ENCODE measurements at regions of chr1 and their contacts with region 1.

Region 1: DNA sequence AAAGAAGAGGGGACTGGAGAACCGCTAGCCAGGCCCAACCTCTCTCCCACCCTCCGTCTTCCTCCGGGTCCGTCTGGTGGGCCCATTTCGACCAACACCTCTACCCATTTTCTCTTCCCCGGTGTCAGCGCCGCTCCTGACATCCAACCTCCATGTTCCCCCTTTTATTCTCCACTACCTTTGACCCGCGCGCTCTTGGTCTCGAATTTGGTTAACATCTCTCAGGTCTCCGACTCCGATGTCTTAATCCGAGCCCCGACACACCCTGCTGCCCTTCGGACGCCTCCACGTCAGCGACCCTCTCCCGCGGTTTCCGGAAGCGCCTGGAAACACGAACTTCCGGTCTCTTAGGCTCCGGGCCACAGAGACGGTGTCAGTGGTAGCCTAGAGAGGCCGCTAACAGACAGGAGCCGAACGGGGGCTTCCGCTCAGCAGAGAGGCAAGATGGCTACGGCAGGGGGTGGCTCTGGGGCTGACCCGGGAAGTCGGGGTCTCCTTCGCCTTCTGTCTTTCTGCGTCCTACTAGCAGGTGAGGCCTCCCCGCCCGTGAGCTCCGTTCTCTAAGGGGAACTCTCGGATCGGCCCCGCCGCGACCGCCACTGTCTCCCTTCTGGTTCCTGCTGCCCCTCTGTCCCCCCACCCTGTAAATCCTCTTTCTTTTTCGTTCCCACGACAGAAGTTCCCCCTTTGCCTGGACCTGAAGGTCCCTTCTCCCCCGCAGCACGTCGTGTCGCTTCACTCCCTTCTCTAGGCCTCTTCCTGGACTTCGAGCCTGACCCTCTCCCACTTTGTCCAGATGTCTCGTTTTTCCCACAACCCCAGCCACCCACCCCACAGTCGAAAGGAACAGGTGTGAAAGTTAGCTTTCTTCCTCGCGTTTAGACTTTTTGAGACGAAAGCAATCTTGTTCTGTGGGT is at the starts of genes COPA and NCSTN:
- DNase-seq: peak; percentile 96
- H3K4me3 ChIP-seq: peak within 1 kb of the TSS; percentile 68 to 84 (median 75)
- H3K27ac ChIP-seq: peak within 1 kb of the TSS; percentile 78 to 92 (median 89)
- H3K4me1 ChIP-seq: peaks cover 0 to 34% (median 21%) of the 10 kb centered on the region in 4 donors
- H3K27me3 ChIP-seq: no peaks in the 10 kb centered on the region
- CTCF ChIP-seq: no peak
- EP300 ChIP-seq: no peak
- POLR2A ChIP-seq: peak; percentile 84 to 93
- total RNA-seq, gene COPA: 93.8 to 117 (median 96.5) TPM
- total RNA-seq, gene NCSTN: 30.3 to 46.7 (median 39.0) TPM

Region 2: DNA sequence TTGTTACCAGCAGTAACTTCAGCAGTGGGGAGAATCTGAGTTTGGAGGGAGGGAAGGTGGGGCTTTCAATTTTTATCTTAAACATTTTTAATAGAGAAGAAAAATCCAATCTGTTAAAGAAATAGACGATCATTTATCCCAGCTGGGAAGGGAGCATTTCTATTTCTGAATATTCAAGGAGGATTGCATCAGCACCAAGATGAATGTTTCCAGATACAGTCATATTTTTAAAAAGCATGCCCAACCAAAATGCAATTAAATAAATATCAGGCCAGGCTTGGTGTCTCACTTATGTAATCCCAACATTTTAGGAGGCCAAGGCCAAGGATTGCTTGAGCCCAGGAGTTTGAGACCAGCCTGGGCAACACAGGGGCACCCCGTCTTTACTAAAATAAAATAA is 193.5 kb before region 1 on chr1:
- intact Hi-C with region 1: no loop called
- DNase-seq: no peak
- H3K4me3 ChIP-seq: no peak overlapping the region
- H3K27ac ChIP-seq: no peak overlapping the region
- H3K4me1 ChIP-seq: peaks cover 0 to 10% (median 4%) of the 10 kb centered on the region in 4 donors
- H3K27me3 ChIP-seq: no peaks in the 10 kb centered on the region
- CTCF ChIP-seq: no peak
- EP300 ChIP-seq: no peak
- POLR2A ChIP-seq: no peak

Region 3: GRCh38 chr1:160291248-160292220 is 51.7 kb before region 1 on chr1:
- intact Hi-C with region 1: loop called (anchors 5 kb)
- DNase-seq: peak; percentile 81
- H3K4me3 ChIP-seq: no peak overlapping the region
- H3K27ac ChIP-seq: peak overlapping the region in 2 of 4 donors; percentile 29 to 47
- H3K4me1 ChIP-seq: peaks cover 0 to 4% (median 2%) of the 10 kb centered on the region in 4 donors
- H3K27me3 ChIP-seq: no peaks in the 10 kb centered on the region
- CTCF ChIP-seq: peak; percentile 73 to 88 (median 77)
- EP300 ChIP-seq: no peak
- POLR2A ChIP-seq: no peak

Region 4: DNA sequence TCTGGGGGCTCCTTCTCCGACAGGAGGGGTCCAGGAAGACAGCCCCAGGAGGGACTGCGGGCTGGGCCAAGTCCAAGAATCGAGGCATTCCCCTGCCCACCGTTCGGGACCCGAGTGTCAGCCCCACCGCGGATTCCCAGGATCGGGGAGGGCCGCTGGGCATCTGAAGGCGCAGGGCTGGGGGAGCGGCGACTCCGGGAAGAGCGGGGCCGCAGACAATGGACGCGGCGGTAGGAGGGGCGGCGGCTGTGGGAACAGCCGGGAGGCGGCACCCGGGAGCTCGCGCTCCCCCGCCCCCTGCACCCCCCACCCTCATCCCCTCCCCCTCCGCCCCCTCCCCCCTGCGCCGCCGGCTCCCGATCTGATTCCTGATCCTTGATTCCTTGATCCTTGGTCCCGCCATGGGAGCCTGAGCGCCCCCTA is 57.0 kb after region 1 on chr1 and contains the start of gene VANGL2:
- intact Hi-C with region 1: loop called (anchors 5 kb)
- DNase-seq: peak; percentile 89
- H3K4me3 ChIP-seq: peak within 1 kb of the TSS; percentile 59 to 82 (median 77)
- H3K27ac ChIP-seq: peak within 1 kb of the TSS; percentile 65 to 83 (median 72)
- H3K4me1 ChIP-seq: peaks cover 0 to 22% (median 13%) of the 10 kb centered on the region in 4 donors
- H3K27me3 ChIP-seq: no peaks in the 10 kb centered on the region
- CTCF ChIP-seq: no peak
- EP300 ChIP-seq: no peak
- POLR2A ChIP-seq: no peak
- total RNA-seq, gene VANGL2: 3.2 to 6.6 (median 3.6) TPM